Activated CD4-positive, alpha-beta T cell treated with anti-CD3 and anti-CD28 coated beads, Interleukin-2, amount 10 ng/mL, durations not matched to agents 24 days and 14 days (primary cell): ENCODE measurements at regions of chr1 and their contacts with region 1.

Region 1: GRCh38 chr1:70247768-70248167 is 26.6 kb downstream of the SRSF11 start:
- DNase-seq: no peak
- H3K4me3 Mint-ChIP-seq: no peak overlapping the region
- H3K27ac Mint-ChIP-seq: peak overlapping the region; percentile 31
- H3K4me1 Mint-ChIP-seq: peaks cover 28% of the 10 kb centered on the region
- H3K27me3 Mint-ChIP-seq: no peaks in the 10 kb centered on the region

Region 2: GRCh38 chr1:70228670-70229069 is 19.1 kb before region 1 on chr1:
- intact Hi-C with region 1: loop called (anchors 2 kb)
- DNase-seq: no peak
- H3K4me3 Mint-ChIP-seq: no peak overlapping the region
- H3K27ac Mint-ChIP-seq: no peak overlapping the region
- H3K4me1 Mint-ChIP-seq: peaks cover 30% of the 10 kb centered on the region
- H3K27me3 Mint-ChIP-seq: no peaks in the 10 kb centered on the region

Region 3: GRCh38 chr1:70264839-70265238 is 17.1 kb after region 1 on chr1:
- intact Hi-C with region 1: no loop called
- DNase-seq: no peak
- H3K4me3 Mint-ChIP-seq: no peak overlapping the region
- H3K27ac Mint-ChIP-seq: no peak overlapping the region
- H3K4me1 Mint-ChIP-seq: no peaks in the 10 kb centered on the region
- H3K27me3 Mint-ChIP-seq: no peaks in the 10 kb centered on the region

Region 4: GRCh38 chr1:70314706-70315304 is 67.0 kb after region 1 on chr1:
- intact Hi-C with region 1: no loop called
- DNase-seq: no peak
- H3K4me3 Mint-ChIP-seq: no peak overlapping the region
- H3K27ac Mint-ChIP-seq: no peak overlapping the region
- H3K4me1 Mint-ChIP-seq: peaks cover 2% of the 10 kb centered on the region
- H3K27me3 Mint-ChIP-seq: no peaks in the 10 kb centered on the region